HEK293 (cell line): ENCODE measurements at regions of chr4 and their contacts with region 1.

Region 1: GRCh38 chr4:10535912-10536311 is 78.7 kb upstream of the ZNF518B start:
- H3K4me3 ChIP-seq: no peak overlapping the region
- H3K27ac ChIP-seq: no peak overlapping the region
- H3K4me1 ChIP-seq: no peaks in the 10 kb centered on the region; the same call in 1 of the 2 replicates
- CTCF ChIP-seq: no peak

Region 2: DNA sequence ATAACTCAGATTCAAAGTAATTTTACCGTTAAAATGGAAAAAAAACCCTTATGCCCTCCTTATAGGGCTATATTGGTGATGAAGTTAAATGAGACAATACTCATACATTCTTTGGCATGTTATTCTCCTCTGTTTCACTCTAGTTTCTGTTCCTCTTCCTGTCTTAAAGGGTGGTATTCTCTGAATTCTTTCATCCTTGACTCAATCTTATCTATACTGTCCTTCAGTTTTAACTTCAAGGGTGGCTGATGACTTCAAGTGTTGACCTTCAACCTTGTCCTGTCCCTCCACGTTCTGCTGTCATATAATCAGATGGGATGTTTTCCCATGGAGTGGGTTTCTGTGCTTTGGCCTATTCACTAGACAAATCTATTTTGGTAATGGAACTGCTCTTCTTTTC is 122.7 kb before region 1 on chr4:
- CTCF ChIA-PET with region 1: no interaction called
- POLR2A ChIA-PET with region 1: no interaction called
- H3K4me3 ChIP-seq: no peak overlapping the region
- H3K27ac ChIP-seq: no peak overlapping the region
- H3K4me1 ChIP-seq: no peaks in the 10 kb centered on the region
- CTCF ChIP-seq: no peak

Region 3: DNA sequence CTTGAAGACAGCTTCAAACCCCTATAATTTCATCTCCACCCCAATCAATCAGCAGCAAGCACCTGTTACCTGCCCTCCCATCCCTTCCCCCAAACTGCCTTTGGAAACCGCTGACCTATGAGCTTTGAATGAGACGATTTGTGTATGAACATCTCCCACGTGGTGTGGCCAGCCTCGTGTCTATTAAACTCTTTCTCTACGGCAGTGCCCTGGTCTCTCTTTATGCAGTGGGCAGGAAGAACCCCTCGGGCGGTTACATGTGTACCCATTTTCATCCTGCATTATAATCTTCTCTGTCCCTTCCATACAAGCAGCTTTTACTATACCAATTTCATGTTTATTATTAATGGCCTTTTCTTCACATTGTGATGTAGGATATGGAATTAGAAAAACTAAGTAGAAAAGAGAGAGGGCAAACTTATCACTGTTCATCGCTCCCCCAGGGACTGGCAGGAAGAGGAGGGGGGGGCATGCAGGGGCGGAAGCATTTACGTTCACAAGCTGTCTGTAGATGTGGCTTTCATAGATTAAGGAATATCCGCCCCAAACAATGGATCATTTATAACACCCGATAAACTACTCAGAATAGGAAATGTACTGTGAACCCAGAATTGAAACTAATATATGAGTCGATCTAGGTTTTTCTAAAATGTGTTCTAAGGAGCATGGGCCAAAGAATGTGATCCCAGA is 16.8 kb after region 1 on chr4:
- CTCF ChIA-PET with region 1: interaction called, 16 read pairs
- POLR2A ChIA-PET with region 1: no interaction called
- H3K4me3 ChIP-seq: no peak overlapping the region
- H3K27ac ChIP-seq: no peak overlapping the region
- H3K4me1 ChIP-seq: no peaks in the 10 kb centered on the region
- CTCF ChIP-seq: no peak

Region 4: DNA sequence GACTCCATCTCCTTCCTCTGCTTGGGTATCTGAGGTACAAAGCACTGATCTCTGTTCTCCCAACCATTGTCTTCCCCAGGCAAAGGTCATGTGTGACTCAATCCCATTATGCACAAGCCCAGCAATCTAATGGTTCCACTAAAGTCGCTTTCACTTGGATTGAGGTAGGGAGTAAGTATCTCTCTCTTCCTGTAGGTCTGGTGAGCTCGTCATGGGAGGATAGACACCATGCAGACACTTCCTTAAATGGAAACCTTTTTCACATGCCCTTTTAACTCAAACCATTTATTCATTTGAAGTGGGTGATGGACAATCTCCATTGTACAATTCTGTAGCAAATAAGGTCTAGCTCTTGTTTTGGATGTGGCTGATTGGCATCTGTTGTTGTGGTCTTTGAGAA is 393.9 kb after region 1 on chr4:
- CTCF ChIA-PET with region 1: no interaction called
- POLR2A ChIA-PET with region 1: no interaction called
- H3K4me3 ChIP-seq: no peak overlapping the region
- H3K27ac ChIP-seq: no peak overlapping the region
- H3K4me1 ChIP-seq: no peaks in the 10 kb centered on the region
- CTCF ChIP-seq: no peak